HEK293 (cell line): ENCODE measurements at regions of chr14 and their contacts with region 1.

Region 1: GRCh38 chr14:76995279-76996005 is 33.1 kb downstream of the IRF2BPL start:
- H3K4me3 ChIP-seq: no peak overlapping the region
- H3K27ac ChIP-seq: no peak overlapping the region
- H3K4me1 ChIP-seq: peaks cover 6% of the 10 kb centered on the region
- CTCF ChIP-seq: no peak

Region 2: GRCh38 chr14:77023001-77023996 is 27.9 kb after region 1 on chr14:
- CTCF ChIA-PET with region 1: interaction called, 3 read pairs
- POLR2A ChIA-PET with region 1: interaction called, 10 read pairs
- H3K4me3 ChIP-seq: no peak overlapping the region
- H3K27ac ChIP-seq: peak overlapping the region; percentile 100
- H3K4me1 ChIP-seq: peaks cover 10% of the 10 kb centered on the region
- CTCF ChIP-seq: no peak